ENCODE measurements at regions of chr19 and their contacts with region 1.

Region 1: DNA sequence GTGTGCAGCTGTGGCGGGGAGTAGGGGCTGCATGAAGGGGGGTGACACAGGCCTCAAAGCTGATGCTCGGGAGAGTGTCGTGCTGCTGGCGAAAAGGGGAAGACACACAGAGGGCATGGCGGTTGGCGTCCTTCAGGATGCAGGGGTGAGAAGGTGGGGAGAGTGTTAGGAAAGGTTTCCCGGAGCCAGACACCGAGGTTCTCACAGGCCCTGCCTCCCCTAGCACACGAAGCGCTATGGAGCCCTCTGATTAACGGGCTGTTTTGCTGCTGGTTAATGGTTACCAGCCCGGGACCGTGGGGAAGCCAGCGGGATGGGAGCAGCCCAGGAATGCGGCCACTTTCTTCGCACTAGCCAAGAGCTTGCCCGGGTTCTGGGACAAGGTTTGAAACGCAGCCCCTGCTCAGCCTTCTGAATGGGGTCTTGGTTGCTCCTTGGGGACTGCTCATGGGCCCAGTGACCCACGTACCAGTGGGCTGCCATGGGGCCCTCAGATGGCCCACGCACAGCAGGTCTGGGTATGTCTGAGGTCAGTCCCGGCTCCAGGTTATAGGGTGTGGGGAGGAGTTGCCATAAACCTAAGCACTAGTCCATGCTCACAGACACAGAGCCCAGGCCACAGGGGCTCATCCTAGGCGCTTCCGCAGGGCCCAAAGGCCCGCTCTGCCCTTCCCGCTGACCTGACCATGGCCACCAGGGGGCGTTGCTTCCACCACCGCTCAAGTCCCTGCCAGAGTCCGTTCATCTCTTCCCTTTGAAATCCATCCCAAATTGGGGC is 31.3 kb upstream of the ISYNA1 start:
- DNase-seq: no peak
- ATAC-seq: peak; percentile 78
- H3K4me3 ChIP-seq: no peak overlapping the region
- H3K27ac ChIP-seq: no peak overlapping the region
- H3K4me1 ChIP-seq: no peaks in the 10 kb centered on the region
- H3K27me3 ChIP-seq: no peaks in the 10 kb centered on the region
- CTCF ChIP-seq: peak; percentile 45 to 69 (median 66)
- EP300 ChIP-seq: no peak
- POLR2A ChIP-seq: no peak
- RAD21 ChIP-seq: peak; percentile 46; the same call in 1 of the 2 replicates

Region 2: GRCh38 chr19:18349524-18350128 is 119.6 kb before region 1 on chr19:
- CTCF ChIA-PET with region 1: no interaction called
- POLR2A ChIA-PET with region 1: no interaction called
- RAD21 ChIA-PET with region 1: no interaction called
- SMC1A ChIA-PET with region 1: no interaction called
- in situ Hi-C with region 1: no loop called
- intact Hi-C with region 1: no loop called
- DNase-seq: no peak
- ATAC-seq: peak; percentile 80
- H3K4me3 ChIP-seq: no peak overlapping the region
- H3K27ac ChIP-seq: no peak overlapping the region
- H3K4me1 ChIP-seq: no peaks in the 10 kb centered on the region
- H3K27me3 ChIP-seq: no peaks in the 10 kb centered on the region
- CTCF ChIP-seq: peak; percentile 74 to 93 (median 80)
- EP300 ChIP-seq: no peak
- POLR2A ChIP-seq: no peak
- RAD21 ChIP-seq: peak; percentile 88

Region 3: DNA sequence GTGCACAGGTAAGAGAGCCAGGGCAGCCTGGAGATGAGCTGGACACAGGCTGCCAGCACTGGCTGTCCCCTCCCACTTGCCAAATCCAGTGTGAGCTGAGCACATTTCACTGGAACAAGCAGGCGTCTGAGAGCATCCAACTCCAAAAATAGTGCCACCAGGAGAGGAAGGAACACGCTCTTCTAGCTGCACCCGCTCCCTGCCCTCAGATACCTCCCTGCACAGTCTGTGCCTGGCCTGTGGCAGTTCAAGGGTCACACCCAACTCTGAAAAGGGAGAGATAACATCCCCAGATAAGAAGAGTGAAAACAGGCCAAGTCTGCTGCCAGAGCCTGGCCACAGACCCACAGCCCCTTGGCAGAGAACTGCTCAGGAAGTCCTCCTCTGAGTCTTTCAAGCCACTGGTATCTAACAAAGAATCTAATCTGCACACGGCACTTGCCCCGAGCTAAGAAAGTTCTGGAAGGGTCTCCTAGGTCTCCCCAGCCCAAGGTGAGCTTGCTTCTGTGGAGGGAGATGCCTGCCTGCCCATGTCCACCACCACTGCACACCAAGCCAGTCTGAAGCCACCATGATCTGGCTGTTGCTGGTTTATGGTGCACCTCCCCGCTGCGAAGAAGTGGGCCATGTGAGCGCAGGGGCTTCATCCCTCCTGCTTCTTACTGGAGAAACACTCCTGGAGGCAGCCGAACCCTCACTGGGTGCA is 37.9 kb after region 1 on chr19:
- CTCF ChIA-PET with region 1: interaction called, 3 read pairs
- POLR2A ChIA-PET with region 1: no interaction called
- RAD21 ChIA-PET with region 1: no interaction called
- SMC1A ChIA-PET with region 1: no interaction called
- in situ Hi-C with region 1: no loop called
- intact Hi-C with region 1: loop called (anchors 5 kb)
- DNase-seq: no peak
- ATAC-seq: no peak
- H3K4me3 ChIP-seq: no peak overlapping the region
- H3K27ac ChIP-seq: no peak overlapping the region
- H3K4me1 ChIP-seq: peaks cover 31% of the 10 kb centered on the region
- H3K27me3 ChIP-seq: no peaks in the 10 kb centered on the region
- CTCF ChIP-seq: no peak
- EP300 ChIP-seq: no peak
- POLR2A ChIP-seq: no peak
- RAD21 ChIP-seq: no peak

Region 4: DNA sequence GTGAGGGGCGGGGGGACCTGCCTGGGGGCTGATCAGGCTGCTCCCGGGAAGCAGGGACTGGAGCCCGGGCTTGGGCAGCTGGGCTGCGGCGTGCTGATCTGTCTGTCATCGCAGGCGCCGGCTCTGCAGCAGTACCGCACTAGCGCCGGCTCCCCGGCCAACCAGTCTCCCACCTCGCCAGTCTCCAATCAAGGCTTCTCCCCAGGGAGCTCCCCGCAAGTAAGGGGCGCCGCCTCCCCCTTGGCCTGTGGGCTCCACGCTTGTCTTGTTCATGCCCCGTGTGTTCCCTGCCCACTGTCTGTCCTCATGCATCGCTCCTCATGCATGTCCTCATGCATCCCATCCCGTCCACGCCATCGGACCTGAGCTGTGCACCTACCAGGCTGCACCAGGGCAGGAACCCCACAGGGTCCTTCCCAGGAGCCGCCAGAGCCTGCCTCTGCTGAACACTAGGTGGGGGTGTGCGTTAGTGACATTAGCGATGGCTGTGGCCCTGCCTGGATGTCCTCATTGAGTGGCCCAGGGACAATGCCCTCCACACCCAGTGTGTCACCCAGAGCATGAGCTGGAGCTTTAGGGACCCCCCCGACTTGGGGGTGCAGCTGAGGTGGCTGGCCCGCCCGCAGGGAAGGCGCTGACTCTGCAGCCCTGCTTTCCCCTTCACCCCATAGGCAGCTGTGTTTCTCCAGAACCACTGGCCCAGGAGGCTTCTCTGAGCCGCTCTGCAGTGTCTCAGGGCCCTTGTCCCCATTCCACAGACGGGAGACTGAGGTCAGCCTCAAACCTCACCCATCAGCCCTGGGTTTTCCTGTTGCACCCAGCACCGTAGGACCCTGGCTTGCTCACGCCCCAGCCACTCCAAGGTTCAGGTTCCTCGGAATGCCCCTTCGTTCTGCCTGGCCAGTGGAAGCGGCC is 302.3 kb after region 1 on chr19:
- CTCF ChIA-PET with region 1: no interaction called
- POLR2A ChIA-PET with region 1: no interaction called
- RAD21 ChIA-PET with region 1: no interaction called
- SMC1A ChIA-PET with region 1: no interaction called
- in situ Hi-C with region 1: no loop called
- intact Hi-C with region 1: no loop called
- DNase-seq: no peak
- ATAC-seq: peak; percentile 82
- H3K4me3 ChIP-seq: no peak overlapping the region
- H3K27ac ChIP-seq: no peak overlapping the region
- H3K4me1 ChIP-seq: no peaks in the 10 kb centered on the region
- H3K27me3 ChIP-seq: no peaks in the 10 kb centered on the region
- CTCF ChIP-seq: peak; percentile 38 to 60 (median 57); a peak in 4 of 6 replicates
- EP300 ChIP-seq: no peak
- POLR2A ChIP-seq: no peak
- RAD21 ChIP-seq: peak; percentile 43